ENCODE measurements at regions of chr1 and their contacts with region 1.

Region 1: DNA sequence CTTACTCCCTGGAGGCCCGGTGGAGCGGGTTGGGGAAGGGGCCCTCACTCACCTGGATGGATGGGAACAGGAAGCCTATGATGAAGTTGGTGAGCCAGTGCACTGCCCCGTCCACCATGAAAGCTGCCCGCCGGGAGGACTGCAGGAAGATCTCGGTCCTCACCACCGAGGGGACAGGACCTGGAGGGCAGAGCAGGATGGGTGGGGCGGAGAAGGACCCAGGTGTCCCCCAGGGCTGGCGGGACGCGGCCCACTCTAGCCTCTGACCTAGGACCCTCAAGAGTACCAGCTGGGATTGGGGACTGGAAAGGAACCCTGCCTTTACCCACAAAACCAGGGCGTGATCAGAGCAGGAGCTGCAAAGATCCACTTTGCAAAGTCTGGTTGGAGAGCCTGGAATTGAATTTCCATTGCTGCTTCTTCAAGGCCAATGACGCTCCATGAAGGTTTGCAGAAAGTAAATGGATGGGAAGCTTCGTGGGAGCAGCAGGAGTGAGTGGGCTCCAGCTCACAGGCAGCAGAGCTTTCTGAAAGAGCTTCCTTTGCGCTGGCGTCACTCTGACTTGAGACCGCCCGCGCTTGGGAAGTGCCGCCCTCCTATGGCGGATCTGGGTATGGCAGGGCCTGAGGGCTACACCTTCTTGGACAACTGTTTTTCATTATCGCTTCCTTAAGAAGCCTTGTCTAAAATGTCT is 21.4 kb downstream of the SLC2A7 start:
- DNase-seq: peak; percentile 71 to 93 (median 89)
- ATAC-seq: peak; percentile 73
- H3K4me3 ChIP-seq: no peak overlapping the region
- H3K4me1 ChIP-seq: peaks cover 3% of the 10 kb centered on the region
- CTCF ChIP-seq: peak; percentile 94

Region 2: DNA sequence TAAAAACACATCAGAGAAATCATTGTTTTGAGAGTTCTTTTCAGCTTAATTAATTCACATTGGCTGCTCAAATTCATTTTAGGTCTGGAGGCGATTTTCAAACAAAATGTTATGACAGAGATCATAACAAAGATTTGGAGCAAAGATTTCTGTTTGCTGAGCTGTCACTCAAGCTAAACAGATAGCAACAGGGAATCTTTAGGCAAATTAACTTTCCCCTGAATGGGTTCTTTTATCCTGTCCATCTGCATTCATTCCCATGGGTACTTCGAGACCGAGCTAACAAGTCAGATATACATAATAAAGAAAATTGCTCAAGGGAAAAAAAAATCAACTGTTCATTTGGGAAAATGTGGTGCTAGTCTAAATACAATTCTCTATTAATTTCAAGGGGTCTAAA is 89.4 kb before region 1 on chr1:
- intact Hi-C with region 1: loop called in 1 of 2 experiments (anchors 5 kb)
- DNase-seq: no peak
- ATAC-seq: no peak
- H3K4me3 ChIP-seq: no peak overlapping the region
- H3K4me1 ChIP-seq: no peaks in the 10 kb centered on the region
- CTCF ChIP-seq: no peak

Region 3: GRCh38 chr1:9101510-9102146 is 96.8 kb after region 1 on chr1:
- intact Hi-C with region 1: loop called (anchors 5 kb)
- DNase-seq: peak; percentile 39 to 68 (median 55)
- ATAC-seq: peak; percentile 83
- H3K4me3 ChIP-seq: no peak overlapping the region
- H3K4me1 ChIP-seq: no peaks in the 10 kb centered on the region
- CTCF ChIP-seq: peak; percentile 39